ENCODE measurements at regions of chr11 and their contacts with region 1.

Region 1: DNA sequence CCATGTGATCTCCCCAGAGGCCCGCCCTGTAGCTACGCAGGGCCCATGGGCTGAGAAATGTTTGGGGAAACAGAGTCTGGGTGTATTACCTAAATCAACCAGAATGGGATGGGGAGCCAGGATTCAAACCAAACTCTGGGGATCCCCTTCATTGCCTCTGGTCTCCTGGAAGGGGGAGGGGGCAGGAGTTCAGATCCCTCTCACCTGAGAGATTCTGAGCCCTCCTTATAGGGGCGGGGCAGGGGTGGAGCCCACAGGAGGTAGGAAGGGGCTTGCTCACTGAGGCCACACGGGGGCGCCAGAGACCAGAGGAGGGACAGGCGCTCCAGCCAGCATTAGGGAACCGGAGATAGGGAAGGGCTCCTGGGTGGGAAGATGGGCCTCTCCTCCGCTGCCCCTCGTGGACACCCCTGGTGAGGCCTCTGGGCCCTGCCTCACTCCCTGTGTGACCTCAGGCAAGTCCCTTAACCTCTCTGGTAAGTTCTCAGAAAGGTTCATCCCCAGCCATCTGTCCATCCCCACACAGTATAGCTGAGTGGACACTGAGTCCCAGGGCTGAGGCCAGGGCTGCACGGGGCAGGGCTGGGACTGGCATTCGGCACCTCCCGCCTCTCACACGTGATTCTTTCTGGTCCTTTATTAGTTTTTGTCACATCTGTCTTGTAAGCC is 2.7 kb upstream of the CDC42BPG start:
- DNase-seq: peak; percentile 97
- H3K4me3 Mint-ChIP-seq: no peak overlapping the region
- H3K27ac Mint-ChIP-seq: peak overlapping the region; percentile 33
- H3K4me1 Mint-ChIP-seq: peaks cover 65% of the 10 kb centered on the region
- H3K27me3 Mint-ChIP-seq: no peaks in the 10 kb centered on the region
- CTCF ChIP-seq: peak; percentile 94

Region 2: GRCh38 chr11:64489831-64490441 is 357.2 kb before region 1 on chr11:
- CTCF ChIA-PET with region 1: no interaction called
- intact Hi-C with region 1: no loop called
- DNase-seq: peak; percentile 69
- H3K4me3 Mint-ChIP-seq: no peak overlapping the region
- H3K27ac Mint-ChIP-seq: no peak overlapping the region
- H3K4me1 Mint-ChIP-seq: no peaks in the 10 kb centered on the region
- H3K27me3 Mint-ChIP-seq: peaks cover 80% of the 10 kb centered on the region
- CTCF ChIP-seq: peak; percentile 75

Region 3: DNA sequence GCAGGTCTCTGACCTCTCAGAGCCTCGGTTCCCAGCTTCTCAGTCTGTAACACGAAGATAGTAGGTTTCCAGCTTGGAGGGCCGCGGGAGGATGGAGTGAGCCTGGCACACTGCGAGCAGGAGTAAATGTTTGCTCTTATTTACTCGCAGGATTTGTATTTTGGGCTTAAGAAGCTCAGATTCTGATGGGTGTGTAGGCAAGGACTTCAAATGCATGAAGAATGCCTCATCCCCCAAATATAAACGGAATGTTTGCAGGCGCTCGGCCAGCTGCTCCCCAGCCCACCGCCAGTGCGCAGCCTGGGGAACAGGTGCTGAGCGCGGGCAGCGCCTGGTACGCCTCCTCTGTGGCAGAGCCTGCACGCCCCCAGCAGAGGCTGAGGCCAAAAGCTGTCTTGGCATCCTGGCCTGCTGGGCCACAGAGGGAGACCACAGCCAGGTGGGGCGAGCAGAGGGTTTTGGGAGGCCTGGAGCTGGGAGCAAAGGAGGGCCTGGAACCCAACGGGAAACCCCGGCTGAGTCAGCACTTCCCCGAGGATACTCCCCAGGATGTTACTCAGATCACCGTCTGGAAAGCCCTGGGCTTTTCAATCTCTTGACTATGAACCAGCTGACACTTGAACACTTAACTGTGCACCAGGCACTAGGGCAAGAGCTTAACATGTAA is 21.9 kb after region 1 on chr11:
- CTCF ChIA-PET with region 1: interaction called, 14 read pairs
- intact Hi-C with region 1: no loop called
- DNase-seq: peak; percentile 40
- H3K4me3 Mint-ChIP-seq: peak overlapping the region; percentile 15
- H3K27ac Mint-ChIP-seq: no peak overlapping the region
- H3K4me1 Mint-ChIP-seq: peaks cover 67% of the 10 kb centered on the region
- H3K27me3 Mint-ChIP-seq: no peaks in the 10 kb centered on the region
- CTCF ChIP-seq: no peak

Region 4: DNA sequence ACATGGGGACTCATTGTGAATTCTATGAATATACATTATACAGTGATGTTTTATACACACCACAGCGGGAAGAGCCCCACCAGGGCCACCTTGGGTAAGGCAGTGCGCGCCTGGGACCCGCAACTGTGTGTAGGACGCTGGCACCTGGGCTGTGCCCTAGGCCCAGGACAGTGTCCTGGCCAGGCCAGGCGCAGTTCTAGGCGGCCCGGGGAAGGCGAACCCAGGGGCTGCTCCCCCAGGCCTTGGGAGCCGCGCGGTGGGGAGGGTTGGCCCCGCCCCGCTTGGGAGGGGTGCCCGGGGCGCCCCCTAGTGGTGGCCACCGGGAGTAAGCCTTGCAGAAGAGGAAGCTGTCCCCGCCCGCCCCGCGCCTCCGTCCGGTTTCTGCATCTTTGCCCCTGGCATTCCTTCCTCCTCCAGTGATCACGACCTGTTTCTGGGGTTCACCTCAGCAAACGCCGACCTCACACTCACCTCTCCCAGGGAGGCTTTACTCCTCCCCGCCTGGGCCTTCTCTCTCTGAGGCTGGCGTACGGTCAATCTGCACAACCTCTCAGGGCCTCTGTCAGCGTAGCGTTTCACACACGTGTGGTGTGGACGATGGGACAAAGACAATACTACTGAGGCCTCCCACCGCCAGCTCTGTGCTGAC is 40.7 kb after region 1 on chr11:
- CTCF ChIA-PET with region 1: interaction called, 49 read pairs
- intact Hi-C with region 1: loop called (anchors 2 kb)
- DNase-seq: peak; percentile 91
- H3K4me3 Mint-ChIP-seq: peak overlapping the region; percentile 63
- H3K27ac Mint-ChIP-seq: peak overlapping the region; percentile 77
- H3K4me1 Mint-ChIP-seq: peaks cover 65% of the 10 kb centered on the region
- H3K27me3 Mint-ChIP-seq: no peaks in the 10 kb centered on the region
- CTCF ChIP-seq: peak; percentile 98

Region 5: GRCh38 chr11:64996710-64997380 is 149.7 kb after region 1 on chr11 and contains the start of gene BATF2:
- CTCF ChIA-PET with region 1: interaction called, 12 read pairs
- intact Hi-C with region 1: loop called (anchors 5 kb)
- DNase-seq: peak; percentile 84
- H3K4me3 Mint-ChIP-seq: peak within 1 kb of the TSS; percentile 68
- H3K27ac Mint-ChIP-seq: peak within 1 kb of the TSS; percentile 82
- H3K4me1 Mint-ChIP-seq: peaks cover 28% of the 10 kb centered on the region
- H3K27me3 Mint-ChIP-seq: no peaks in the 10 kb centered on the region
- CTCF ChIP-seq: no peak
- total RNA-seq, gene BATF2: 4.5 and 11.3 TPM in 2 replicates

Region 6: DNA sequence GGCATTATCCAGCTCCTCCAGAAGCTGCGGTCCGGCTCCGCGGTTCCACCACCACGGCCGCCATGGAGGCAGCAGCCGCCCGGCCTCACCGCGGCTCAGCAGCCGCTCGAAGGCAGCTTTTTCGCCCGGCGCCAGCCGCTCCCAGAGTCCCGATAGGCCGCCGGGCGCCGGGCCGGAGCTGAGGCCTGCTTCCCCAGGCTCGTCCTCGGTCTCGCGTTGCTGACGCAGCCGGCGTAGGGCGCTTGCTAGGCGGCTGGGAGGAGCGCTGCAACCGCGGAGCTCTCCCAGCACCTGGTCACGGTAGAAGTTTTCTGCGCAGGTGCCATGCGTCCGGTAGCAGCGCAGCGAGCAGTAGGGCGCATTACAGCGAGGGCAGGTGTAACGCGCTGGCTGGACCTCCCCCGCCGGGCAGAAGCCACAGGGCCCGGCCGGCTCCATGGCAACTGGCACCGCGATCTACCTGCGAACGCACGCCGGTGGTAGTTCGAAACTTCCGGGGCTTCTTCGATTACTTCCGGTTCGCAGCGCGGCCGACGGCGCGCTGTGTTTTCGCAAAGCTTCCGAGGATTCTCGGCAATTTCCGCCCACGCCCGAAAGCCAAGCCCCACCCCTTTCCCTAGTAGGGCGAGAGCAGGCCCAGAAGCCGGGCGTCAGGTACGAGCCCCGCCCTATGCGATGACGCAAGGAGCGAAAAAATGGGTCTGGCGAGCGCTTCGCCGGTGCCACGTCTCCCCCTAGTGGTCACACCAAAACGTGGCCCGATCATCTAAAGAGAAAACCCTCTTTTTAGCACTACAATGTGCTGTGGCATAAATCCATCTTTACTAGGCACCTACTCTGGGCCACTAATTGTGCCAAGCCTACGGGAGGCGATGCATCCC is 270.3 kb after region 1 on chr11 and contains the start of gene ZNHIT2:
- CTCF ChIA-PET with region 1: no interaction called
- intact Hi-C with region 1: loop called (anchors 10 kb)
- DNase-seq: peak; percentile 99
- H3K4me3 Mint-ChIP-seq: peak within 1 kb of the TSS; percentile 82
- H3K27ac Mint-ChIP-seq: peak within 1 kb of the TSS; percentile 90
- H3K4me1 Mint-ChIP-seq: peaks cover 31% of the 10 kb centered on the region
- H3K27me3 Mint-ChIP-seq: no peaks in the 10 kb centered on the region
- CTCF ChIP-seq: peak; percentile 88
- total RNA-seq, gene ZNHIT2: 13.2 and 17.2 TPM in 2 replicates